ENCODE measurements at regions of chr6 and their contacts with region 1.

Region 1: GRCh38 chr6:35669451-35670045 is 19.2 kb downstream of the FKBP5 start:
- DNase-seq: peak; percentile 30
- H3K4me3 ChIP-seq: peak overlapping the region; percentile 47
- H3K27ac ChIP-seq: peak overlapping the region; percentile 36
- H3K4me1 ChIP-seq: peaks cover 49% of the 10 kb centered on the region
- CTCF ChIP-seq: no peak

Region 2: GRCh38 chr6:35731736-35732532 is 62.4 kb after region 1 on chr6:
- CTCF ChIA-PET with region 1: no interaction called
- POLR2A ChIA-PET with region 1: interaction called, 7 read pairs
- intact Hi-C with region 1: loop called (anchors 5 kb)
- DNase-seq: peak; percentile 94
- H3K4me3 ChIP-seq: peak overlapping the region; percentile 76
- H3K27ac ChIP-seq: peak overlapping the region; percentile 96
- H3K4me1 ChIP-seq: peaks cover 71% of the 10 kb centered on the region
- CTCF ChIP-seq: peak; percentile 48; the same call in 1 of the 2 replicates

Measured in OCI-LY7 (cell line).